Right ventricle myocardium inferior (tissue), 1 donor: ENCODE measurements at regions of chr7 and their contacts with region 1.

Region 1: DNA sequence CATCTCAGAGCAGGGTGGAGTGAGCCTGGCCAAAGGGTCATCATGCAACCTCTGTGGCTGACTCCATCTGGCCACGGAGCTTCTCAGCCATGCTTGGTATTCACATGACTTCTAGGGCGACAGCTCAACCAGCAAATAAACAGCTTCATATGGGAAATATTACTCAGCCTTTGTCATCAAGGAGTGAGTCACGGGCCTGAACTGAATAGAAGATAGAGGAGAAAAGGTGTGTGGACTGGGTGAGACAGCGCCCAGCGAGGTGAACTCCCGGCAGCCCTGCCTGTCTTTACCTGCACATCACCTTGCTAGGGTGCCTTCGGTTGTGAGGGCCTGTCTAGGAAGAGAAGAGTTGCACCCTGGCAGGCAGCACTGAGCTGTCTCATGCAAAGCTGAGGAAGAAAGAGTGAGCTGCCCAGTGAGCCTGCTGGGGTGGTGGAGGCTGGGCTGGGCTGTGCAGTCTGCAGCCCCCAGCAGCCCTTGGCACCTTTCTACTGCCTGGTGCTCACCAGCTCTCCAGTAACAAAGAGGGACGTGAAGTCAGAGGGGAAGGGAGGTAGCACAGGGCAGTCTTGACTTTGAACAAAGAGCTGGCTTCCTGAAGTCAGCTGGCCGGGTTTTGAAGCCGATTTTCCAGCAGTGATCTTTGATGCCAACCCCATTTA is 114.2 kb downstream of the EGFR start:
- DNase-seq: no peak
- ATAC-seq: no peak

Region 2: DNA sequence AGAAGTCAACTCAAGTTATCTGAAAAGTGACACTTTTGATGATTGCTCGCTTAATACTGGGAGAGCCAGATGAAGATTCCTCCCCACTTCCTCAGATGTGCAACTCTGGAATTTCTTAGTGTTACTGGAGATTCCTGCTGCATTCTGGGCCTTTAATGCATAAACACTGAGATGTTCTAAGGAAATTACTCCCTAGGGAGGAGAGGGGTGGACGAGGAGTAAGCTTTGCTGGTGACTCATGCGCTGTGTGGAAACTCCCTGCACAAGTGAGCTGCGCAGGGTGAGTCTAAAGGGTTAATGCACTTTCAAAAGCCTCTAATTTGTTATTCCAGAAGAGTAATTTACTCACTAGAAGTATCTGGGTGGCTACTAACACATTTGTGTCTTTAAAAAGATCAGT is 67.9 kb before region 1 on chr7:
- intact Hi-C with region 1: loop called (anchors 2 kb)
- DNase-seq: no peak
- ATAC-seq: peak; percentile 67